SK-N-SH (cell line): ENCODE measurements at regions of chr11 and their contacts with region 1.

Region 1: GRCh38 chr11:36116161-36116560 is 172.3 kb downstream of the LDLRAD3 start:
- DNase-seq: no peak
- H3K4me3 ChIP-seq: no peak overlapping the region
- H3K27ac ChIP-seq: no peak overlapping the region
- H3K4me1 ChIP-seq: no peaks in the 10 kb centered on the region
- H3K27me3 ChIP-seq: no peaks in the 10 kb centered on the region
- CTCF ChIP-seq: no peak
- EP300 ChIP-seq: no peak
- RAD21 ChIP-seq: no peak

Region 2: GRCh38 chr11:36131721-36132397 is 15.7 kb after region 1 on chr11:
- CTCF ChIA-PET with region 1: interaction called, 10 read pairs
- POLR2A ChIA-PET with region 1: no interaction called
- DNase-seq: peak; percentile 65
- H3K4me3 ChIP-seq: no peak overlapping the region; a peak in 1 of 4 replicates
- H3K27ac ChIP-seq: no peak overlapping the region
- H3K4me1 ChIP-seq: peaks cover 0 to 5% of the 10 kb centered on the region in 2 experiments; a peak in 3 of 4 replicates
- H3K27me3 ChIP-seq: no peaks in the 10 kb centered on the region
- CTCF ChIP-seq: peak; percentile 50
- EP300 ChIP-seq: no peak
- RAD21 ChIP-seq: peak; percentile 74